Activated naive CD4-positive, alpha-beta T cell treated with anti-CD3 and anti-CD28 coated beads for 36 hours (primary cell): ENCODE measurements at regions of chr3 and their contacts with region 1.

Region 1: GRCh38 chr3:122609798-122610559 is 32.5 kb downstream of the PARP15 start:
- DNase-seq: peak; percentile 51
- H3K4me3 Mint-ChIP-seq: peak overlapping the region; percentile 40
- H3K27ac Mint-ChIP-seq: peak overlapping the region; percentile 90
- H3K4me1 Mint-ChIP-seq: peaks cover 24% of the 10 kb centered on the region
- H3K27me3 Mint-ChIP-seq: no peaks in the 10 kb centered on the region

Region 2: GRCh38 chr3:122427857-122428471 is 182.0 kb before region 1 on chr3:
- CTCF ChIA-PET with region 1: no interaction called
- intact Hi-C with region 1: loop called (anchors 1 kb)
- DNase-seq: no peak
- H3K4me3 Mint-ChIP-seq: no peak overlapping the region
- H3K27ac Mint-ChIP-seq: peak overlapping the region; percentile 63
- H3K4me1 Mint-ChIP-seq: peaks cover 20% of the 10 kb centered on the region
- H3K27me3 Mint-ChIP-seq: no peaks in the 10 kb centered on the region

Region 3: DNA sequence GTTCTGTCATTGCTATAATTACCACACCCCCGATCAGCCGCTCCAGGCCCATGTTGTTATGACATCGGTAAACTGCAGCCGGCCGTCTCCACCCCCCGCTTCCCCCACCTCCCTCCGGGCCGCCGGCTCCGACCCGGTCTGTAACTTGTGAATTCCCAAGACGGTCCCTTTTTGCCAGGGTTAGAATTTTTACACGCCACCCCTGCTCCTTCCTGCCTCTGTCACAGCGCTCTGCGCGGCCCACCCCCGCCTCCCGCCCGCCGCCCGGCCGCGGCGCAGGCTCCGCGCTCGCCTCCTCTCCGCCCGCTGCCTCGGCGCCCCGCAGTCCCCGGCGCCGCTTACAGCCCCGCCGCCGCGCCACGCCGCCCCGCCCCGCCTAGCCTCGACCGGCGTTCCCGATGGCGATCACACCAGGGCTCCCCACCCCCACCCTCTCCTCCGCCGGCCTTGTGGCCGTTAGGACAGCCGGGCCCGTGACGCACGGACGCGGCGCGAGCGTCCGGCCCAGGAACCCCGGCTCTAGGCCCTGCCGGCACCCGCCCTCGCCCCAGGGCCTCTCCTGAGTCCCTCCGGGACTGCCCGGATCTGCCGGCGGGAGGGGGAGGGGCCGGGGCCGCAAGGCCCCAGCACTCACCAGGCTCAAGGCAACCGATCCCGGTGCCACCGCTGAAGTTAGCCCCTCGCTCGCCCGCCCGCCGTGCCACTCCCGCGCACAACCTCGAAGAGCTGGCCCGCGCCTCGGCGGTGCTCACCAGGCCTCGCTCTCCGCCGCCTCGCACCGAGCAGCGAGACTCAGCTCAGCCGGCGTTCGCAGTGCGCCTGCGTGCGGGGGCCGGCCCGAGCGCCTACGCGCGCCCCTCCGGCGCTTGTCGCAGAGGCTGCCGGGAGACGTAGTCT is 95.6 kb before region 1 on chr3 and contains the start of gene KPNA1:
- CTCF ChIA-PET with region 1: no interaction called
- intact Hi-C with region 1: loop called (anchors 1 kb)
- DNase-seq: peak; percentile 86
- H3K4me3 Mint-ChIP-seq: peak within 1 kb of the TSS; percentile 73
- H3K27ac Mint-ChIP-seq: peak within 1 kb of the TSS; percentile 77
- H3K4me1 Mint-ChIP-seq: peaks cover 42% of the 10 kb centered on the region
- H3K27me3 Mint-ChIP-seq: no peaks in the 10 kb centered on the region
- total RNA-seq, gene KPNA1: 45.6 to 45.8 TPM

Region 4: DNA sequence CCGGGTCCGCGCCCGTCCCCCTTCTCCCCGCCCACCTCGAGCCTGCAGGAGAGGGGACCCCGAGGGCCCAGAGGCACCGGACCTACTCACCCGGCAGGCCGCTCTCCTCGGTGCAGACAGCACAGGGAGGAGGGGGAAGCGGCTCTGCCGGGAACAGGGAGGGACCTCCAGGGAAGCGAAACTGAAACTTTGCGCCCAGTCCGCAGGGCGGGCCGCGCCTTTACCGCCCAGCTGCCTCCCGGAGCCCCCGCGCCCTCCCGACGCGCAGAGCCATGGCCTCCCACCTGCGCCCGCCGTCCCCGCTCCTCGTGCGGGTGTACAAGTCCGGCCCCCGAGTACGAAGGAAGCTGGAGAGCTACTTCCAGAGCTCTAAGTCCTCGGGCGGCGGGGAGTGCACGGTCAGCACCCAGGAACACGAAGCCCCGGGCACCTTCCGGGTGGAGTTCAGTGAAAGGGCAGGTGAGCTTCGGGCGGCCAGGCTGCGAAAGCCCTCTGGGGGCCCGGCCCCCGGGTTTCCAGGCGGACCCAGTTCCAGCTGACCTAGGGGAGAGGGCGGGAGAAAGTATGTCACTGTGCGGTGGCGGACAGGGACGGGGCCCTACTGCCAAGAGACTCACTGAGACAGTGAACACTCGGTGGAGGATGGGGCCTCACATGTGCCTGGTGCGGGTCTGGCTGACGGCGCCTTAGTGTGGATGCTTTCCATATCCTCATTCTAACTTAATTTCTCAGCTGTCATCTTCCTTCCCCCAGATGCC is 45.6 kb before region 1 on chr3 and contains the starts of genes DTX3L and PARP9:
- CTCF ChIA-PET with region 1: interaction called, 4 read pairs
- intact Hi-C with region 1: loop called (anchors 1 kb)
- DNase-seq: peak; percentile 75
- H3K4me3 Mint-ChIP-seq: peak within 1 kb of the TSS; percentile 87
- H3K27ac Mint-ChIP-seq: peak within 1 kb of the TSS; percentile 93
- H3K4me1 Mint-ChIP-seq: peaks cover 70% of the 10 kb centered on the region
- H3K27me3 Mint-ChIP-seq: no peaks in the 10 kb centered on the region
- total RNA-seq, gene DTX3L: 22.3 to 24.5 TPM
- total RNA-seq, gene PARP9: 20.4 to 21.1 TPM

Region 5: DNA sequence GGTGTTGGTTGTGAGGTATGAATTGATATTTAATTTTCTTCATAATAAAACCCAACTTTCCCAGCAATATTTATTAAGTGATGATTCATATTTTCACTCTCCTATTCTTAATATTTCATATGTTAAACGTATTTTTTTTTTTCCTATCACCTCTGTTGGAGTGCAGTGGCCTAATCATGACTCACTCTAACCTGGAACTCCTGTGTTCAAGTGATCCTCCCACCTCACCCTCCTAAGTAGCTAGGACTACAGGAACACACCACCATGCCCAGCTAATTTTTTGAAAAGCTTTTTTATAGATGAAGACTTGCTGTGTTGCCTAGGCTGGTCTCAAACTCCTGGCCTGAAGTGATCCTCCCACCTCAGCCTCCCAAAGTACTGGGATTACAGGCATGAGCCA is 23.9 kb before region 1 on chr3:
- CTCF ChIA-PET with region 1: no interaction called
- intact Hi-C with region 1: loop called (anchors 1 kb)
- DNase-seq: no peak
- H3K4me3 Mint-ChIP-seq: no peak overlapping the region
- H3K27ac Mint-ChIP-seq: no peak overlapping the region
- H3K4me1 Mint-ChIP-seq: peaks cover 45% of the 10 kb centered on the region
- H3K27me3 Mint-ChIP-seq: no peaks in the 10 kb centered on the region

Region 6: GRCh38 chr3:122668930-122669730 is 59.2 kb after region 1 on chr3:
- CTCF ChIA-PET with region 1: no interaction called
- intact Hi-C with region 1: loop called (anchors 1 kb)
- DNase-seq: peak; percentile 56
- H3K4me3 Mint-ChIP-seq: no peak overlapping the region
- H3K27ac Mint-ChIP-seq: no peak overlapping the region
- H3K4me1 Mint-ChIP-seq: peaks cover 15% of the 10 kb centered on the region
- H3K27me3 Mint-ChIP-seq: peaks cover 3% of the 10 kb centered on the region